MCF 10A (cell line): ENCODE measurements at regions of chr5 and their contacts with region 1.

Region 1: GRCh38 chr5:134140530-134141201 is 26.2 kb downstream of the TCF7 start:
- DNase-seq: peak; percentile 96
- H3K4me3 Mint-ChIP-seq: no peak overlapping the region
- H3K27ac Mint-ChIP-seq: peak overlapping the region; percentile 60
- H3K4me1 Mint-ChIP-seq: peaks cover 23% of the 10 kb centered on the region
- H3K27me3 Mint-ChIP-seq: no peaks in the 10 kb centered on the region
- CTCF ChIP-seq: peak; percentile 93

Region 2: DNA sequence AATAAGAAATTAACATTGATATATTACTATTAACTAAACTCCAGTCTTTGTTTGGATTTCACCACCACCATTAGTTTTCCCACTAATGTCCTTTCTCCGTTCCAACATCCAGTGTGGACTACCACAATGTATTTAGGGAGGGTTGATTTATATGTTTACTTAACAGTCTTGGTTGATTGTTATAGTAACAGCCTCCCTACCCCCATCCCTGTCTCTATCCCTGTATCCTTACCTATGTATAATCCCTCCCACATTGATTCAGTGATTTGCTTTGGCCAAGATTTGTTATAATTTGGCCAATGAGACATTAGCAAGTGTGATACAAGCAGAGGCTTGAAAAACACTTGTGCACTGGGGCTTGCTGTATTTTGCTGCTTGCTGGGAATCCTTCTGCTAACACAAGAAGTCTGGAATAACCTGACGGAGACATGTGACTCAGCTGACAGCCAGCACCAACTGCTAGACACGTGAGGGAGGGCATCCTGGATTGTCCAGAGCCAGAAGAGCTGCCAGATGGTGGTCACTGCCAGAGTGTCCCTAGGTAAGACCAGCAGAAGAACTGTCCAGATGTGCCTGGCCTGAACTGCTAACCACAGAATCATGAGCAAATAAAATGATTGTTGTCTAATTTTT is 77.4 kb before region 1 on chr5:
- CTCF ChIA-PET with region 1: interaction called, 12 read pairs
- POLR2A ChIA-PET with region 1: interaction called, 4 read pairs
- intact Hi-C with region 1: no loop called
- DNase-seq: peak; percentile 18
- H3K4me3 Mint-ChIP-seq: no peak overlapping the region
- H3K27ac Mint-ChIP-seq: no peak overlapping the region
- H3K4me1 Mint-ChIP-seq: peaks cover 13% of the 10 kb centered on the region
- H3K27me3 Mint-ChIP-seq: no peaks in the 10 kb centered on the region
- CTCF ChIP-seq: no peak

Region 3: GRCh38 chr5:134119720-134120119 is 20.9 kb before region 1 on chr5:
- CTCF ChIA-PET with region 1: interaction called, 29 read pairs
- POLR2A ChIA-PET with region 1: interaction called, 8 read pairs
- intact Hi-C with region 1: no loop called
- DNase-seq: no peak
- H3K4me3 Mint-ChIP-seq: no peak overlapping the region
- H3K27ac Mint-ChIP-seq: no peak overlapping the region
- H3K4me1 Mint-ChIP-seq: peaks cover under 1% of the 10 kb centered on the region
- H3K27me3 Mint-ChIP-seq: no peaks in the 10 kb centered on the region
- CTCF ChIP-seq: no peak

Region 4: GRCh38 chr5:134153657-134154056 is 13.0 kb after region 1 on chr5:
- CTCF ChIA-PET with region 1: interaction called, 102 read pairs
- POLR2A ChIA-PET with region 1: interaction called, 11 read pairs
- intact Hi-C with region 1: no loop called
- DNase-seq: no peak
- H3K4me3 Mint-ChIP-seq: no peak overlapping the region
- H3K27ac Mint-ChIP-seq: peak overlapping the region; percentile 13
- H3K4me1 Mint-ChIP-seq: peaks cover 26% of the 10 kb centered on the region
- H3K27me3 Mint-ChIP-seq: no peaks in the 10 kb centered on the region
- CTCF ChIP-seq: no peak

Region 5: GRCh38 chr5:134794082-134794481 is 653.4 kb after region 1 on chr5:
- CTCF ChIA-PET with region 1: no interaction called
- POLR2A ChIA-PET with region 1: no interaction called
- intact Hi-C with region 1: no loop called
- DNase-seq: no peak
- H3K4me3 Mint-ChIP-seq: no peak overlapping the region
- H3K27ac Mint-ChIP-seq: no peak overlapping the region
- H3K4me1 Mint-ChIP-seq: no peaks in the 10 kb centered on the region
- H3K27me3 Mint-ChIP-seq: no peaks in the 10 kb centered on the region
- CTCF ChIP-seq: no peak